ENCODE measurements at regions of chr19 and their contacts with region 1.

Region 1: GRCh38 chr19:48618916-48619691 is at the starts of genes RPL18 and SPHK2:
- DNase-seq: peak; percentile 100
- H3K4me3 ChIP-seq: peak within 1 kb of the TSS; percentile 85 to 99 (median 96)
- H3K27ac ChIP-seq: peak within 1 kb of the TSS; percentile 86
- H3K4me1 ChIP-seq: peaks cover 31% of the 10 kb centered on the region
- H3K27me3 ChIP-seq: no peaks in the 10 kb centered on the region
- CTCF ChIP-seq: no peak
- POLR2A ChIP-seq: peak; percentile 96
- total RNA-seq, gene RPL18: 1,402 and 1,407 TPM in 2 replicates
- total RNA-seq, gene SPHK2: 30.5 and 31.1 TPM in 2 replicates

Region 2: DNA sequence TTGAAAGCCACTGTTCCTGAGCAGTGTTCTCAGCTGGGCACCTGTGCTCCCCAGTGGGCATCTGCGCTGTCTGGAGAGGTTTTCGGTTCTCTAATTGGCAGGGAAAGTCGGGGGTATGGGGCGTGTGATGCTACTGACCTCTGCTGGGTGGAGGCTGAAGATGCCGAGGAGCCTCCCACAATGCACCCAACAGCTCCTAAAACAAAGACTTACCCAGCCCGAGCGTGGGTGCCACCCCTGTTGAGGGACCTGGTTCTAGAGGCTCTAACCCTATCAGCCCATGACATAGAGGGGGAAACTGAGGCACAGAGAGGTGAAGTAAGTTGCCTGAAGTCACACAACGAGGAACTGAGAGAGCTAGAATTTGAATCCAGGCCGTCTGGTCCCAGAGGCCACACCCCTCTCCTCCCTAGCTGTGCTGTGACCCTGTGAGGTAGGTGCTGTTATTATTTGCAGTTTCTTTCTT is 10.3 kb before region 1 on chr19:
- CTCF ChIA-PET with region 1: interaction called, 5 read pairs
- POLR2A ChIA-PET with region 1: interaction called, 15 read pairs
- dilution Hi-C with region 1: no loop called
- intact Hi-C with region 1: no loop called
- DNase-seq: no peak
- H3K4me3 ChIP-seq: no peak overlapping the region
- H3K27ac ChIP-seq: no peak overlapping the region
- H3K4me1 ChIP-seq: no peaks in the 10 kb centered on the region
- H3K27me3 ChIP-seq: no peaks in the 10 kb centered on the region
- CTCF ChIP-seq: peak; percentile 39 to 41
- POLR2A ChIP-seq: no peak

Region 3: DNA sequence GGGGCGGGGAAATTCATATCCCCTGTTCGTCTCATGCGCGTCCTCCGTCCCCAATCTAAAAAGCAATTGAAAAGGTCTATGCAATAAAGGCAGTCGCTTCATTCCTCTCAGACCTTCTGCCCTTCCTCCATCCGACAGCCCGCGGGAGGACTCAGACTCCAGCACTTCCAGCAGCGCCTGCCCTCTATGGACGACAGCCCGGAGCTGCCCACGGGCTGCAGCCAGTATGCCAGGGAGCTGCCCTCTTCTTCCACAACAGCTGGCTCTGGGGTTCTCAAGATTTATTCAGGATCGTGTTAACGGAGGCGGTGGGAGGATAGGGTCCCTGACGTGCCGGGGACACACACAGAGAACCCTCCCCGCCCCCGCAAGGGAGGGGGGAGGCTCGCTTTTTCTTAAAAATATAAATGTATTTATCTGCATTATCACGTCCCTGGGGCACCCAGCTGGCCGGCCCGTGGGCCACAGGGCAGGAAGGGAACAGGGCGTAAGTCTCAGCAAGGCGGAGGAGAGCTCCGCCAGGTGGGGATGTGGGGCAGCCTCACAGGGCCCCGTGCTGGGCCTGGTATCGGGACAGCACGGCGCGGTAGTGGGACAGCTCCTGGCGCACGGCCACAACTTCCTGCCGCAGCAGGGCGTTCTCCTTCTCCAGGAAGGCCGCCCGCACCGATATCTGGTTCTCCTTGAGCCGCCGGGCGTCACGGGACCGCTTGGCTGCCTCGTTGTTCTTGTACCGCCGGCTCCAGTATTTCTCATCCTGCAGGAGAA is 11.4 kb after region 1 on chr19:
- CTCF ChIA-PET with region 1: interaction called, 12 read pairs
- POLR2A ChIA-PET with region 1: interaction called, 10 read pairs
- dilution Hi-C with region 1: no loop called
- intact Hi-C with region 1: no loop called
- DNase-seq: peak; percentile 70
- H3K4me3 ChIP-seq: peak overlapping the region; percentile 6 to 19 (median 17)
- H3K27ac ChIP-seq: peak overlapping the region; percentile 13
- H3K4me1 ChIP-seq: peaks cover 25% of the 10 kb centered on the region
- H3K27me3 ChIP-seq: no peaks in the 10 kb centered on the region
- CTCF ChIP-seq: peak in 1 of 2 donors; percentile 33
- POLR2A ChIP-seq: peak; percentile 53

Region 4: GRCh38 chr19:48637170-48637947 is 18.3 kb after region 1 on chr19 and contains the start of gene DBP:
- CTCF ChIA-PET with region 1: interaction called, 4 read pairs
- POLR2A ChIA-PET with region 1: interaction called, 4 read pairs
- dilution Hi-C with region 1: no loop called
- intact Hi-C with region 1: loop called (anchors 1 kb)
- DNase-seq: peak; percentile 98
- H3K4me3 ChIP-seq: peak within 1 kb of the TSS in 2 of 3 experiments; percentile 30 to 34
- H3K27ac ChIP-seq: no peak within 1 kb of the TSS
- H3K4me1 ChIP-seq: peaks cover 26% of the 10 kb centered on the region
- H3K27me3 ChIP-seq: peaks cover 3 to 13% of the 10 kb centered on the region in 2 experiments
- CTCF ChIP-seq: no peak
- POLR2A ChIP-seq: no peak
- total RNA-seq, gene DBP: 0.78 and 1.5 TPM in 2 replicates

Region 5: DNA sequence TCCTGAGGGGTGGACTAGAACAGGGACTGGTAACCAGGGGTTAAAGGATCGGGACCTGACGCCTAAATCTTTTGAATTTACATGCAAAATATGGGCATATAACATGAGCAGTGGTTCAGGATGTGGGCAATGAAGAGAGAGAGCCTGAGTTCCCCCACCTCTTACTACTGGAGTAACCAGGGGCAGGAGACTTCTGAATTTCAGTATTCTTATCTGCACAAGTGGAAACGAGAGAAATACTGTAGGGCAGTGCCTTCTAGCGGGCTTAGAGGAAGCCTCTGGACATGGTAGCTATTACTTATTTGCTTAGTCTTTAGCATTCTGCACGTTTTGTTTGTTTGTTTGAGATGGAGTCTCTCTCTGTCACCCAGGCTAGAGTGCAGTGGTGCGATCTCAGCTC is 165.4 kb after region 1 on chr19:
- CTCF ChIA-PET with region 1: no interaction called
- POLR2A ChIA-PET with region 1: no interaction called
- dilution Hi-C with region 1: no loop called
- intact Hi-C with region 1: no loop called
- DNase-seq: peak; percentile 21
- H3K4me3 ChIP-seq: no peak overlapping the region
- H3K27ac ChIP-seq: no peak overlapping the region
- H3K4me1 ChIP-seq: peaks cover 9% of the 10 kb centered on the region
- H3K27me3 ChIP-seq: no peaks in the 10 kb centered on the region
- CTCF ChIP-seq: peak in 1 of 2 donors; percentile 18
- POLR2A ChIP-seq: no peak

Measured in endothelial cell of umbilical vein (primary cell).